ENCODE measurements at regions of chr4 and their contacts with region 1.

Region 1: GRCh38 chr4:37858872-37859271 is 32.0 kb upstream of the TBC1D1 start:
- DNase-seq: no peak
- H3K4me3 ChIP-seq: no peak overlapping the region
- CTCF ChIP-seq: no peak

Region 2: GRCh38 chr4:37896206-37896860 is 37.5 kb after region 1 on chr4:
- in situ Hi-C with region 1: loop called (anchors 5 kb)
- DNase-seq: no peak
- H3K4me3 ChIP-seq: no peak overlapping the region
- CTCF ChIP-seq: no peak

Region 3: DNA sequence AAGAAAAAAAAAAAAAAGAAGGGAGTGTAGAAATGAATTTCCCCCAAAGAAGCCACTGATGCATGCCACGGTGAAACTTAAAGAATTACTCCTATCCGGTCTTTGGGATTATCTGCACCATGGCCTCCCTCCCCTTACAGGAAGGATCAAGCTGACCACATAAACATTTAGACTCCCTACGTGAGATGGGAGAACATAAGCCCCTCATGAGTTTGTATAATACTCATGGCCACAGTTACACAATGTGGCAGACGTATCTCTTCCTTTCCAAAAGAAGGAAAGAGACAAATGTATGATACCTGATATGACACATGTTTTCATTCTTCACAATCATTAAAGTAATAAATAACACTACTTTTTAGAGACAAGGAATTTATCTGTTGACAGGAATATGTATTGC is 98.1 kb after region 1 on chr4:
- in situ Hi-C with region 1: loop called (anchors 5 kb)
- DNase-seq: no peak
- H3K4me3 ChIP-seq: no peak overlapping the region
- CTCF ChIP-seq: no peak